GM12878 (cell line): ENCODE measurements at regions of chr11 and their contacts with region 1.

Region 1: DNA sequence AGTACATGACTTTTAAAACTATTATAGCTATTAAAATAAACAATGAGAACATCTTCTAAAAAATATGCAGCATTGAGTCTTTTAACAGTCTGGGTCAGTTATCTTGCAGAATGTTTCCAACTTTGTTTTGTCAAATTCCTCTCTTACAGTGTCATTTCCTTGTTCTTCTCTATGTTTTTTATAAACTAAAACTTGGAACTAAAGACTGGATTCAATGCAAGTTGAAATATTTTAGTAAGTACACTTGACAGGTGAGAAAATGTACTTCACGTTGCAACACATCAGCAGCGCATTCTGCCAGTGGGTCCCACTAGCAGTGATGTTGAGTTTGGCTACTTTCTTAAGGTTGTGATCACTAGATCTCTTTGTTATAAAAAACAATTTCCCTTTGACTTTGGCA is 1407.6 kb upstream of the RAG2 start:
- DNase-seq: no peak
- ATAC-seq: no peak
- H3K4me3 ChIP-seq: no peak overlapping the region
- H3K27ac ChIP-seq: no peak overlapping the region
- H3K4me1 ChIP-seq: no peaks in the 10 kb centered on the region
- H3K27me3 ChIP-seq: no peaks in the 10 kb centered on the region
- CTCF ChIP-seq: no peak
- EP300 ChIP-seq: no peak
- POLR2A ChIP-seq: no peak
- RAD21 ChIP-seq: no peak

Region 2: DNA sequence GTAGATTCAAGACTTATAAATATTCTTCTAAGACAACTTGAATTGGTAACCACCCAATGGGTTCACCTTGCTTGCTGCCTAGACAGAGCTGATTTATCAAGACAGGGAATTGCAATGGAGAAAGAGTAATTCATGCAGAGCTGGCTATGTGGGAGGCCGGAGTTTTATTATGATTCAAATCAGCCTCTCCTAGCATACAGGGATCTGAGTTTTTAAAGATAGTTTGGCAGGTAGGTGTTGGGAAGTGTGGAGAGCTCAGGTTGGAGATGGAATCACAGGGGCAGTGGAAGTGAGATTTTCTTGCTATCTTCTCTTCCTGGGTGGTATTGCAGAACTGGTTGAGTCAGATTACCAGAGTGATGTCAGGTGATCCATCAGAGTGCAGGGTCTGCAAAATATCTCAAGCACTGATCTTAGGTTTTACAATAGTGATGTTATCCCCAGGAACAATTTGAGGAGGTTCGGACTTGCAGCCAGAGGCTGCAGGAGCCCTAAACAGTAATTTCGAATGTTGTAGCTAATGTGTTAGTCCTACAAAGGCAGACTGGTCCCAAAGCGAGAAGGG is 41.1 kb after region 1 on chr11:
- CTCF ChIA-PET with region 1: no interaction called
- POLR2A ChIA-PET with region 1: no interaction called
- RAD21 ChIA-PET with region 1: no interaction called
- SMC1A ChIA-PET with region 1: no interaction called
- in situ Hi-C with region 1: loop called (anchors 5 kb)
- intact Hi-C with region 1: no loop called
- DNase-seq: no peak
- ATAC-seq: no peak
- H3K4me3 ChIP-seq: no peak overlapping the region
- H3K27ac ChIP-seq: no peak overlapping the region
- H3K4me1 ChIP-seq: no peaks in the 10 kb centered on the region
- H3K27me3 ChIP-seq: no peaks in the 10 kb centered on the region; a peak in 1 of 4 replicates
- CTCF ChIP-seq: no peak
- EP300 ChIP-seq: no peak
- POLR2A ChIP-seq: no peak
- RAD21 ChIP-seq: no peak